Lower leg skin (tissue), 4 donors: ENCODE measurements at regions of chr12 and their contacts with region 1.

Region 1: DNA sequence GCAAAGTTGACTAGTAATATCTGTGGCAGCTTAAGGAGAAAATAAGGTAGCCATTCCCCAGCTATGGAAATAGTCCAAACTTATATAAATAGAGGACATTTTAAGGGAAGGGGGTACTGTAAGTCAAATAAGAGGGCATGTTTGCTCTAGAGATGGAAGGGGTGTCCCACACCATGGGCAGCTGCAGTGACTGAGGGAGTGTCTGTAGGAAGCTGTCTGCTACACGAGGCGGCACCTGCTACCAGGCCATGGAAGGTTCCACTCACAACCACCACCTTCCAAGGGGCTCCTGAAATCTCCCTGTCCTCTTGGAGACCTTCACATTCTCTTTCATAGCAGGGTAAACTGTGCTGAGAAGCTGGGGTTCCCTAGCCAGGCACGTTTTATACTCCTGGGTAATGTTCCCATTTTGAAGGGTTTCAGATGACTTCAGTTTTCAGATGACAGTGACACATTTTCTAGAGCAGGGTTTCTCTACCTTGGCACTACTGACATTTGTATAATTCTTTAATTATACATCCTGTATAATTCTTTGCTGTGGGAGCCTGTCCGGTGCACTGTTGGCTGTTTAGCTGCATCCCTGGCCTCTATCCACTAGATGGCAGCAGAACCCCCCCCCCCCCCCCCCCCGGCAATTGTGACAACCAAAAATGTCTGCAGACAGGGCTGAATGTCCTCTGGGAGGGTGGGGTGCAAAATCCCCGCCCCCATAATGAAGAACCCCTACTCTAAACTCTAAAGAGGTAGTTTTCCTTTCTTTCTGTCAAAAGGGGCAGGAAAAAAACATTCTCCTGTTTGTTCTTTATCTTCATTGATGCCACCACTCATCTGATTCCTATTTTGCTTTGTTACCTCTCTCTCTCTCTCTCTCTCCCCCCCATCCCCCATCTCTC is 11.6 kb upstream of the SMCO2 start:
- DNase-seq: no peak
- H3K4me3 ChIP-seq: no peak overlapping the region
- CTCF ChIP-seq: no peak
- POLR2A ChIP-seq: no peak

Region 2: DNA sequence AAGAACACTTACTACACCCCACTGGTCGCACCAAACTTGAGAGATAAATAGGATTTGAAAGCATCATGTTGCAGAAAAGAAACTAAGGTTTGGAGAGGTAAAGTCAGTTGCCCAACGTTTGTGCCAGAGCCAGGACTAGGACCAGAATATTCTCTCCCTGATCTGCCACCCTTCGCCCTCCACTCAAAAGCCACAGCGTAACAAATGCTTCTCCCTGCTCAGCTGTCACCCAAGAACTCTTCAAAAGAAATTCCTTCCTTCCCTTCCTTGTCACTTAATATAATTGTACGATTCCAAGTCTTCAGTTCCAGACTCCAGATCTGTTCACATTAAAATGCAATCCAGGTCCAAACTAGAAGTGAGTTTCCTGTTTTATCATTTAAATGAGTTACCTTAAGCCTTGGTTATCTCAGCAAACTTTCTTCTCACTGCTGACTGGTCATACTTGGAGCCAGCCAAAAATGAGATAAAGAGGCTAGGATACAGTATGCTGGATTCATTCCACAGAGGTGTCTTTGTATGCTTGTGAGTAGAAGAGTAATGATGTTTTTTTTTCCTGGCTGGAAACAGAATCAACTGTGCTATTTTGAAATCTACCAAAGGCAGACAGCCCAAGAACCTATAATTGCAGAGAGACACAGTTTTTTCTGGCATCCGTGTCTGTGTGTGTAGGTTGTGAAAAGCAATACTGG is 76.3 kb after region 1 on chr12:
- intact Hi-C with region 1: loop called (anchors 10 kb)
- DNase-seq: no peak
- H3K4me3 ChIP-seq: no peak overlapping the region
- CTCF ChIP-seq: no peak
- POLR2A ChIP-seq: no peak

Region 3: DNA sequence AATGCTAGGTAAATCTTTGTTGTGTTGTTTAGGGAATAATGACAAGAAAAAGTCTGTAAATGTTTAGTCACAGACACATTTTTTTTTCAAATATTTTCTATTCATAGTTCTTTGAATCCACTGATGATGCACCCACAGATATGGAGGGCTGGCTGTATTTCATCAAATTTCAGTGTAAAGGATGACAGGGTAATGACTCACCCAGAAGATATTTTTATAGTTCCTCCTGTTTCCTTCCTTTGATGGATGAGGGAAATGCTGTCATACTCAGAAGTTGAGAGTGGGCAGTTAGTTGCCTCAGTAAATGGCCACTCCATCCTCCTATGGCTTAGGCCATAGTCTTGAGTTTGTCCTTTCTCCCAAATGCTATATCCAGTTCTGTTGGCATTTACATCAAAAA is 184.4 kb after region 1 on chr12:
- intact Hi-C with region 1: no loop called
- DNase-seq: no peak
- H3K4me3 ChIP-seq: no peak overlapping the region
- CTCF ChIP-seq: no peak
- POLR2A ChIP-seq: no peak

Region 4: GRCh38 chr12:27652174-27652763 is 217.3 kb after region 1 on chr12:
- intact Hi-C with region 1: loop called (anchors 5 kb)
- DNase-seq: peak in 1 of 2 donors; percentile 69
- H3K4me3 ChIP-seq: no peak overlapping the region
- CTCF ChIP-seq: peak in 1 of 3 donors; percentile 28
- POLR2A ChIP-seq: no peak